Endothelial cell of umbilical vein (primary cell): ENCODE measurements at regions of chr2 and their contacts with region 1.

Region 1: DNA sequence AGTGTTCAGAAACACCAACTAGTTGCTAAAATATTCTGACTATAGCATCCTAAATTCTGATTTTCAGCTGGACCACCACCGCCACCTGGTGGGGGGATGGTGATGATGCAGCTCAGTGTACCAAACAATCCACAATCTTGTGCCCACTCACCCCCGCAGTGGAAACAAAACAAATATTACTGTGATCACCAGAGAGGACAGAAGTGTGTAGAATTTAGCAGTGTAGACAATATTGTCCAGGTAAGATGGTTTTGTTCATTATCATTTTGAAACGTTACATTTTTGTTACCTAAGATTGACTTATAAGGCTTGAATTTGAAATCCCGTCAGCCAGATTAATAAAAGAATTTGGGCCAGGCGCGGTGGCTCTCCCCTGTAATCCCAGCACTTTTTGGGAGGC is 31.7 kb upstream of the UBXN4 start:
- DNase-seq: peak; percentile 60
- H3K4me3 ChIP-seq: no peak overlapping the region
- H3K27ac ChIP-seq: no peak overlapping the region
- H3K4me1 ChIP-seq: no peaks in the 10 kb centered on the region
- H3K27me3 ChIP-seq: no peaks in the 10 kb centered on the region
- CTCF ChIP-seq: peak; percentile 76 to 88
- POLR2A ChIP-seq: no peak

Region 2: GRCh38 chr2:134988994-134989605 is 720.9 kb before region 1 on chr2:
- CTCF ChIA-PET with region 1: interaction called, 80 read pairs
- POLR2A ChIA-PET with region 1: no interaction called
- dilution Hi-C with region 1: no loop called
- intact Hi-C with region 1: loop called (anchors 1 kb)
- DNase-seq: peak; percentile 34
- H3K4me3 ChIP-seq: no peak overlapping the region
- H3K27ac ChIP-seq: no peak overlapping the region
- H3K4me1 ChIP-seq: no peaks in the 10 kb centered on the region
- H3K27me3 ChIP-seq: peaks cover 10 to 31% of the 10 kb centered on the region in 2 experiments
- CTCF ChIP-seq: peak; percentile 15 to 33
- POLR2A ChIP-seq: no peak

Region 3: DNA sequence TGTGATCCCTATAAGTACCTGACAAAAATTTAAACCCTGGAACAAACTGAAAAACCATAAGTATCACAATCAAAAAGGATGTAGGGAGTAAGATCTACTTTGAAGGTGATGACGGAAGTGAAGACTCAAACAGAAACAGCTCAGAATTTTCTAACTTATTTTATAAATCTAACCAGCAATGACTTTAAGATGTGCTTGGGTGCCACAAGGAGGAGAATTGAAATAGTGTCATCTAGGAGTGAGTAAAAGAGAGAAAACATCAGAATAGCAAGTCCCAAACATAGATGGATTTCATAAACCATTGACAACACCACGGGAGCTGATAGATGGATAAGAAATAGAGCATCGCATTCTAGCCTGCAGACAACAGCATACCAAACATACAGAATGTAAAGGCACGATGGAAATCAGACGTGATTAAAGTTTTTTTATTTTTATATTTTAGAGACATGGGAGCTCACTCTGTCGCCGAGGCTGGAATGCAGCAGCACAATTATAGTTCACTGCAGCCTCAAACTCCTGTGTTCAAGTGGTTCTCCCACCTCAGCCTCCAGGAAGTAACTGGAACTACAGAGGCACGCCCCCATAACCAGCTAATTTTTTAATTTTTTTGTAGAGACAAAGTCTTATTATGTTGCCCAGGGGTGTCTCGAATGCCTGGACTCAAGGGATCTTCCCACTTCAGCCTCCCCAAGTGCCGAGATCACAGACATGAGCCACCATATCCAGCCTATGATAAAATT is 699.6 kb before region 1 on chr2:
- CTCF ChIA-PET with region 1: interaction called, 231 read pairs
- POLR2A ChIA-PET with region 1: no interaction called
- dilution Hi-C with region 1: no loop called
- intact Hi-C with region 1: no loop called
- DNase-seq: no peak
- H3K4me3 ChIP-seq: no peak overlapping the region
- H3K27ac ChIP-seq: no peak overlapping the region
- H3K4me1 ChIP-seq: no peaks in the 10 kb centered on the region
- H3K27me3 ChIP-seq: peaks cover 10% of the 10 kb centered on the region in 2 experiments
- CTCF ChIP-seq: no peak
- POLR2A ChIP-seq: no peak

Region 4: DNA sequence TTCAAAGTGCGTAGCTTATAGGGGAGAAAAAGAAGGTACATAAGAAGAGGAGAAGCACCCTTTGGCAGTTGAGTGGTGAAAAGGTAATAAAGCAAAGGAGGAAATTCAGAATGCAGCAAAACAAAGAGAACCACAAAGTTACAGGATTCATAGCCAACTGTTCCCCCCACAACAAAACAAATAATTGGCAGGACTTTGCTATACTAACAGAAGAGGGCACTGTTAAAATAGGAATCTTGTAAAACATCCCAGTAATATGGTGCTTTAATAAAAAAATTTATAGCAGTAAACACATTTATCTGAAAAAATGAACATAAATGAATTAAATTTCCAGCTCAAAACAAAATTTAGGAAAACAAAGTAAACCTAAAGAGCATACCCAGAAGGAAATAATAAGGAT is 136.4 kb before region 1 on chr2:
- CTCF ChIA-PET with region 1: interaction called, 22 read pairs
- POLR2A ChIA-PET with region 1: no interaction called
- dilution Hi-C with region 1: no loop called
- intact Hi-C with region 1: no loop called
- DNase-seq: peak; percentile 1
- H3K4me3 ChIP-seq: no peak overlapping the region
- H3K27ac ChIP-seq: no peak overlapping the region
- H3K4me1 ChIP-seq: no peaks in the 10 kb centered on the region
- H3K27me3 ChIP-seq: no peaks in the 10 kb centered on the region
- CTCF ChIP-seq: no peak
- POLR2A ChIP-seq: no peak

Region 5: DNA sequence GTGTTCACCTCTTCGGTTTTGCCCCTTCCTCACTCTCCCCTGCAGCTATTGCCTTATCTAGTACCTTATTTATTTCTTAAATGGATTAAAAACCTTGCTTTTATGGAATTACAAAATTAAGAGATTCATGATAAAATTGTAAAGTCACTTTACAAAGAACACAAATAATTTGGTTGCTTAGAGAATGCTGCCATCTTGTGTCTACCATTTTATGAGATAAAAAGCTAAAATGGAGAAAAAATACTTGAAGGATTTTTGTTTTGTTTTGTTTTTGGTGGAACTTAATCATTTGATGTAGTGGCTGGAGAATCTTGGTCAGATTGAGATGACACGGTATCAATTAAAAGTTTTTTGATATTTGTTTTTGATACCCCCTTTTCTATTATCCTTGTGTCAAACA is 109.1 kb before region 1 on chr2:
- CTCF ChIA-PET with region 1: interaction called, 13 read pairs
- POLR2A ChIA-PET with region 1: no interaction called
- dilution Hi-C with region 1: no loop called
- intact Hi-C with region 1: no loop called
- DNase-seq: peak; percentile 9
- H3K4me3 ChIP-seq: no peak overlapping the region
- H3K27ac ChIP-seq: no peak overlapping the region
- H3K4me1 ChIP-seq: no peaks in the 10 kb centered on the region
- H3K27me3 ChIP-seq: no peaks in the 10 kb centered on the region
- CTCF ChIP-seq: no peak
- POLR2A ChIP-seq: no peak